ENCODE measurements at regions of chr2 and their contacts with region 1.

Region 1: DNA sequence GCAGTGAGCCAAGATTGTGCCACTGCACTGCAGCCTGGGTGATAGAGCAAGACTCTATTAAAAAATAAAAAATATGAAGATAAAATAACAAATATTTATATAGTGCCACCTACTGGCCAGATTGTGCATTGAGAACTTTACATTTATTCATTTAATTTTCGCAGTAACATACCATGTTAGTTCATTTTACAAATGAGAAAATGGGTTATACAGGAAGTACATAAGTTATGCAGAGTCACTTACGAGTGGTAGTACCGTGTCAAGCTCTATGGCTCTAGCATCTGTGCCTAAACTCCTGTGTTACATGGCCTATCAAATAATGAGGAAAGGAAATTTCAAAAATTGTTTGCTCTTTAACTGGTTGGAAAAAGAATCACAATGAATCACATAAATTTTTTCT is 27.9 kb downstream of the RIF1 start:
- DNase-seq: no peak
- ATAC-seq: no peak
- H3K4me3 Mint-ChIP-seq: no peak overlapping the region
- H3K27ac Mint-ChIP-seq: peak overlapping the region; percentile 43
- H3K4me1 Mint-ChIP-seq: peaks cover 6% of the 10 kb centered on the region
- H3K27me3 Mint-ChIP-seq: no peaks in the 10 kb centered on the region

Region 2: DNA sequence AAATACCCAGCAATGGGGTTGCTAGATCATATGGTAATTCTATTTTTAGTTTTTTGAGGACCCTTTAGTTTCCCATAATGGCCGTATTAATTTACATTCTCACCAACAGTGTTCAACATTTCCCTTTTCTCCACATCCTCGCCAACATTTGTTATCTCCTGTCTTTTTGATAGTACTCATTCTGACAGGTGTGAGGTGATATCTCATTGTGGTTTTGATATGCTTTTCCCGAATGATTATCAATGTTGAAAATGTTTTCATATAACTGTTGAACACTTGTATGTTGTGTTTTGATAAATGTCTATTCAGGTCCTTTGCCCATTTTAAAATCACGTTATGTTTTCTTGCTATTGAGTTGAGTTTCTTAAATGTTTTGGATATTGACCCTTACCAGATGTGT is 33.7 kb before region 1 on chr2:
- CTCF ChIA-PET with region 1: no interaction called
- DNase-seq: no peak
- ATAC-seq: no peak
- H3K4me3 Mint-ChIP-seq: no peak overlapping the region
- H3K27ac Mint-ChIP-seq: no peak overlapping the region
- H3K4me1 Mint-ChIP-seq: no peaks in the 10 kb centered on the region
- H3K27me3 Mint-ChIP-seq: no peaks in the 10 kb centered on the region

Region 3: DNA sequence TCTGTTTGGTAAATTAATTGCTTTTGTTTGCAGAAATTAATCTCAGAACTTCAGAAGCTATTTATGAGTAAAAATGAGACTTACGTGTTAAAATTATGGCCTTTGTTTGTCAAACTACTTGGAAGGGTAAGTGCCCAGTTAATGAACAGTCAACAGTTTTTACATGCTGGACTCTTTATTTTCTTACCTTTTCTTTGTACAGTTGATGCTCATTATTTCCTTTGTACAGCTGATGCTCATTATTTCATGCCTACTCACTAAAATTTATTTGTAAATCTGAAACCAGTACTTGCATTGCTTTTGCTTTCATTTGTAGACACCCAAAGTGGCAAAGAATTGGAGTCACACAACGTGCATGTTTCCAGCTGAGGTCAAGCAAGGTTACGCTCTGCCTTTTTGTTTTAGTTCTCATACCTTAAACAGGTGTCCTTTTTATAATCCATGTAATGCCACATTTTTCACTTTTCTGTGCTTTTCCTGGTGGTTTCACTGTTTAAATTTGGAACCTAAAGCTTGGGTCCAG is 14.7 kb before region 1 on chr2:
- CTCF ChIA-PET with region 1: interaction called, 16 read pairs
- DNase-seq: no peak
- ATAC-seq: peak; percentile 74
- H3K4me3 Mint-ChIP-seq: no peak overlapping the region
- H3K27ac Mint-ChIP-seq: peak overlapping the region; percentile 66
- H3K4me1 Mint-ChIP-seq: peaks cover 36% of the 10 kb centered on the region
- H3K27me3 Mint-ChIP-seq: no peaks in the 10 kb centered on the region

Region 4: GRCh38 chr2:151459358-151459757 is 21.7 kb after region 1 on chr2:
- CTCF ChIA-PET with region 1: interaction called, 10 read pairs
- DNase-seq: no peak
- ATAC-seq: no peak
- H3K4me3 Mint-ChIP-seq: no peak overlapping the region
- H3K27ac Mint-ChIP-seq: no peak overlapping the region
- H3K4me1 Mint-ChIP-seq: no peaks in the 10 kb centered on the region
- H3K27me3 Mint-ChIP-seq: no peaks in the 10 kb centered on the region